OCI-LY7 (cell line): ENCODE measurements at regions of chr2 and their contacts with region 1.

Region 1: DNA sequence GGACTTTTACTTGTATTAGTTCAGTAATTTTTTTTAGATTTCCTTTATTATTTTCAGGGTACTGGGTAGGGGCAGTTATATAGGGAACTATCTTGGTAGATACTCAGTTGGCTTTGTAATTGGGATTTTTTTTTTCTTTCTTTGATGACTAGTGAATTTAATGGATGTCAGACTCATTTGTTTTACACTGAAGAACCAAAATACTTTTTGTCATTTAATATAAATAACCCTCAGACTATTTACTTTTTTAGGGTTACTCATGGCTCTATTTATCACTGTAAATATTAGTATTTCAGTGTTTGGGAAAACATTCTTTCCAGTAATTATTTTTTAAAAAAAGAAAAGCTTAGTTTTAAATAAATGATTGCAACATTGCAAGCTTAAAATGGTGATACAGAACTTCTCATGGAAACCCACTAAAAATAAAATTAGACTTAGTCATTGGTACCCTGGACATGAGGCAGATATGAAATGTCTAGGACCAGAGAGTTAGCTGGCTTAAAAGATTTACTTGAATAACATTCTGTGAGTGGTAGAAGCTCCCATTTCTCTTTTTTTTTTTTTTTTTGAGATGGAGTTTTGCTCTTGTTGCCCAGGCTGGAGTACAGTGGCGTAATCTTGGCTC is 74.4 kb upstream of the CYP20A1 start:
- DNase-seq: no peak
- H3K4me3 ChIP-seq: no peak overlapping the region
- H3K27ac ChIP-seq: no peak overlapping the region
- H3K4me1 ChIP-seq: no peaks in the 10 kb centered on the region
- CTCF ChIP-seq: no peak

Region 2: DNA sequence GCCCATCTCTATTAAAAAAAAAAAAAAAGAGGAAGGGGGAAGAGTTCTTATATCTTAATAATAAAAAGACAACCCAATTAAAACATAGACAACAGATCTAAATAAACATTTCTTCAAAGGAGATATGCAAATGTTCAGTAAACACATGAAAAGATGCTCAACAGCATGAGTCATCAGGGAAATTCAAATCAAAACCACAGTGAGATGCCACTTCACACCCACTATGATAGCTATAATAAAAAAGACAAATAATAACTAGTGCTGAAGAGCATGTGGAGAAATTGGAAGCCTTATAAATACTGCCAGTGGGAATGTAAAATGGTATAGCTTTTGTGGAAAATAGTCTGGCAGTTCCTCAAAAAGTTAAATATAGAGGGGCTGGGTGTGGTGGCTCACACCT is 12.9 kb after region 1 on chr2:
- CTCF ChIA-PET with region 1: no interaction called
- POLR2A ChIA-PET with region 1: interaction called, 11 read pairs
- intact Hi-C with region 1: no loop called
- DNase-seq: no peak
- H3K4me3 ChIP-seq: no peak overlapping the region
- H3K27ac ChIP-seq: no peak overlapping the region
- H3K4me1 ChIP-seq: no peaks in the 10 kb centered on the region
- CTCF ChIP-seq: no peak